Posterior vena cava (tissue), 2 donors: ENCODE measurements at regions of chr7 and their contacts with region 1.

Region 1: DNA sequence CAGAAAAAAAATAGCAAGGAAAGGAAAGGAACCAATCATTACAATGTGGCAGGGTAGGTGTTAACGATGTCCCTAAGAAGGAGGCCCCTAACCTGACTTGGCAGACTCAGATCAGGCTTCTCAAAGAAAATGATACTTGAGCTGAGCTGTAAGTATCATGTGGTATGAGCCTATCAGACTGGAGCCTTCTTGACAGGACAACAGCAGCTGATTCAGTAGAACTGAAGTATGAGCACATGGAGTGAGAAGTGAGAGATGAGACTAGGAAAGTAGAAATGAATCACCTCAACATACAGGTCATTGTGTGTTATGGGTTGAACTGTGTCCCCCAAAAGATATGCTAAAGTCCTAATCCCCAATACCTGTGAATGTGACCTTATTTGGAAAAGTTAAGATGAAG is 66.3 kb downstream of the MTERF1 start:
- DNase-seq: no peak

Region 2: DNA sequence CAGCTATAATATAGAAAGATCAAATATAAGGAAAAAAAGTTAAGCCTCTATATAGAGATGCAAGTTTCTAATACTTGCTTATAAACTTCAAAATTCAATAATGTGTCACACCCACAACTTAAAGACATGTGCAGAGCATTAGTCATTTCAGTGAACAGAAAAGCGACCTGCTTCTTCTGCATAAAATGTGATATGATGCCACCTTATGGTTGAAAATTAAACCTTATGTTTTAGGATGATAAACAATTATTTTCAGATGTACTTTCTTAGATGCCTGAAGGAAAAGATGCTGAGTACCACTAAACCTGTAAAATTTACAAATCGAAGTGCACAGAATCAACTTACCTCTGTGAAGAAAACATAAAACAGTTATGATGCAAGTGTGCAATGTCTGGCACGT is 29.7 kb before region 1 on chr7:
- intact Hi-C with region 1: loop called in 1 of 2 experiments (anchors 1 kb)
- DNase-seq: no peak

Region 3: GRCh38 chr7:91796122-91796521 is 18.1 kb before region 1 on chr7:
- intact Hi-C with region 1: no loop called
- DNase-seq: no peak

Region 4: GRCh38 chr7:91866599-91867148 is 52.5 kb after region 1 on chr7:
- intact Hi-C with region 1: loop called in 1 of 2 experiments (anchors 2 kb)
- DNase-seq: no peak

Region 5: GRCh38 chr7:91953618-91954017 is 139.4 kb after region 1 on chr7:
- intact Hi-C with region 1: no loop called
- DNase-seq: no peak